ENCODE measurements at regions of chr12 and their contacts with region 1.

Region 1: DNA sequence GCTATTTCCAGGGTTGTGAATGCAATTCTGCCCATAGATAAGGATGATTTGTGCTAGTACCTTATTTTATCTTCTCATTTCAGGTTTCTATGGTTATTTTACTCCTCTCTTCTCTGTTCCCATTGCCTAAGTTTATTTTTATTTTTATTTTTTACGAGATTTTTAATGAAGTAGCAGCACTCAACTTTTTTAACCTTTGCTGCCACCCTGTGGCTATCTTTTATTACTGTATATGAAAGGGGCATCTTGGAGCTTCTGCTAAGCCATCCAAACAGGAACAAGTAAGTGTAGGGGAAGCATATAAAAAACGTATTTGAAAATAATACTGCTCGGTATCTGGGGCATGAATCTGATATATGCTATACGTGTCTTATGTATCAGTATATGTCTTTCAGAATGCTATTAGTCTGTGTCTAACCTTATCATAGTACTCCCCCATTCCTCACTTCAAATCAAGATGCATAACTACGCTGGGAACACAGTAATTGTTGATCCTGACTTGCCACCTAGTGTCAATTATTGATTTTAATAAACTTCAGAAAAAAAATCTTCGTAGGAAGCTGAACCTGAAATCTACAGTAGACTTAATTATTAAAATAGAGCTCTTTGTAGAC is 60.3 kb downstream of the KLRG1 start:
- DNase-seq: no peak
- ATAC-seq: peak; percentile 65; the same call in 1 of the 2 replicates
- H3K4me3 Mint-ChIP-seq: no peak overlapping the region
- H3K27ac Mint-ChIP-seq: no peak overlapping the region
- H3K4me1 Mint-ChIP-seq: peaks cover 7% of the 10 kb centered on the region; the same call in 1 of the 2 replicates
- H3K27me3 Mint-ChIP-seq: no peaks in the 10 kb centered on the region
- CTCF ChIP-seq: peak; percentile 24

Region 2: DNA sequence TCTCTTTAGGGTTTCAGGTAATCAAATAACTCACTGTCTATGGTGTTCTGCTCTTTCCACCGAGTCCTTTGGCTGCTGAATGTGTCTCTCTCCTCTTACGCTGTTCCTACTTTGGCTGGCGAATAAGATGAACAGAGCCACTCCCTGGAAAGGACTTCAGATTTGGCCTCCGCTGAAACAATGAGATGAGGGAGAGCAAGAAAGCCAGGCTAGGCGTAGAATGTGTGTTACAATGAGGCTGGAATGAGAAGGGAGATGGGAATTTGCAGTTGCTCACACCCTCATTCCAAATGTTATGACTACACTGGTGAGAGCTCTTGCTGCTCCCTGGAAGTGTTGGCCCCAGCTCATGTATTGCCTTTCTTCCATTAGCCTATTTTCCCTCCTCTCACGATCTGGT is 387.0 kb before region 1 on chr12 and contains the start of gene MFAP5:
- CTCF ChIA-PET with region 1: interaction called, 34 read pairs
- POLR2A ChIA-PET with region 1: no interaction called
- DNase-seq: no peak
- ATAC-seq: peak; percentile 29; the same call in 1 of the 2 replicates
- H3K4me3 Mint-ChIP-seq: no peak within 1 kb of the TSS
- H3K27ac Mint-ChIP-seq: no peak within 1 kb of the TSS
- H3K4me1 Mint-ChIP-seq: peaks cover 5% of the 10 kb centered on the region
- H3K27me3 Mint-ChIP-seq: no peaks in the 10 kb centered on the region
- CTCF ChIP-seq: no peak
- total RNA-seq, gene MFAP5: 0.69 to 0.96 TPM in 2 of 3 replicates, not detected in the other

Region 3: GRCh38 chr12:8681041-8681902 is 368.4 kb before region 1 on chr12:
- CTCF ChIA-PET with region 1: interaction called, 15 read pairs
- POLR2A ChIA-PET with region 1: no interaction called
- DNase-seq: no peak
- ATAC-seq: peak; percentile 55
- H3K4me3 Mint-ChIP-seq: peak overlapping the region; percentile 64
- H3K27ac Mint-ChIP-seq: peak overlapping the region; percentile 93
- H3K4me1 Mint-ChIP-seq: peaks cover 30% of the 10 kb centered on the region
- H3K27me3 Mint-ChIP-seq: no peaks in the 10 kb centered on the region
- CTCF ChIP-seq: no peak

Region 4: DNA sequence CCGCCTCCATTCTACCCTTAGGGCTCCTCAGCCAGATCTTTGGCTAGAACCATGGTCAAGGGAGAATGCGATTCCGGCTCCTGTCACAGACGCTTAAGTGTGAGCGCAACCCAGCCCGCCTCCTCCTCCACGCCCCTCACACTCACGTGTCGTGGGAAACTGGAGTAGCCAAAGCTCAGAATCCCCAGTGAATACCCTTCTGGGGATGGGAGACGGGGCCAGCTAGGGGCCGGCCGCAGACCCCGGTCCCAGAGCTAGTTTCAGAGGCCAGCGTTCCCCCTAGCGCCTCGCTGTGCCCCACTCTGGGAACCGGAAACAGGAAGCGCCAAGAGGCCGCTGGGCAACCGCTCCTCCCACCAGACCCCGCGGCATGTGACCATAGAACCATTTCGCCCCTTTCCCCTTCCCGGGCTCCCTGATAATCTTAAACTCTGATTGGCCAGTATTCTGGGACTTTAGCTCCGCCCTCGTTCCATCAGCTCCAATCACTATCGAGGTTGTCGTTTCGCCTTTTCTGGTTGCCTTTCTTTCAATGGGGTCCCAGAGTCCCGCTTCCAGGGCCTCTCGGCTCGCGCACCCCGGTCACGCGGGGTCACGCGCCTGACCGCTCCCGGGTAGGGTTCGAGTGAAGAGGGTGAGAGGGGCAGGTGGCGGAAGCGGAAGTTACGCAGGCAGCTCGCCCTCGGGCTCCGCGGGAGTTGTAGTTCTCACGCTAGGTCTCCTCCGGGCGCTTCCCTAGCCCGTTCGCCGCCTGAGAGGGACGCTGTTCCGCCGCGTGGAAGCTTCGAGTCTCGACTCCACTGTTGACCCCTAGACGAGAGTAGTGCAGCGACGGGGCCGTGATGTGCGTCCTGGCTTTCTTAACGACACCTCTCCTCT is 100.0 kb before region 1 on chr12 and contains the start of gene M6PR:
- CTCF ChIA-PET with region 1: interaction called, 38 read pairs
- POLR2A ChIA-PET with region 1: interaction called, 4 read pairs
- DNase-seq: peak; percentile 91
- ATAC-seq: peak; percentile 89
- H3K4me3 Mint-ChIP-seq: peak within 1 kb of the TSS; percentile 95
- H3K27ac Mint-ChIP-seq: peak within 1 kb of the TSS; percentile 93
- H3K4me1 Mint-ChIP-seq: peaks cover 20% of the 10 kb centered on the region
- H3K27me3 Mint-ChIP-seq: no peaks in the 10 kb centered on the region
- CTCF ChIP-seq: no peak
- total RNA-seq, gene M6PR: 106 to 139 TPM (median 112 TPM) in 3 replicates

Region 5: DNA sequence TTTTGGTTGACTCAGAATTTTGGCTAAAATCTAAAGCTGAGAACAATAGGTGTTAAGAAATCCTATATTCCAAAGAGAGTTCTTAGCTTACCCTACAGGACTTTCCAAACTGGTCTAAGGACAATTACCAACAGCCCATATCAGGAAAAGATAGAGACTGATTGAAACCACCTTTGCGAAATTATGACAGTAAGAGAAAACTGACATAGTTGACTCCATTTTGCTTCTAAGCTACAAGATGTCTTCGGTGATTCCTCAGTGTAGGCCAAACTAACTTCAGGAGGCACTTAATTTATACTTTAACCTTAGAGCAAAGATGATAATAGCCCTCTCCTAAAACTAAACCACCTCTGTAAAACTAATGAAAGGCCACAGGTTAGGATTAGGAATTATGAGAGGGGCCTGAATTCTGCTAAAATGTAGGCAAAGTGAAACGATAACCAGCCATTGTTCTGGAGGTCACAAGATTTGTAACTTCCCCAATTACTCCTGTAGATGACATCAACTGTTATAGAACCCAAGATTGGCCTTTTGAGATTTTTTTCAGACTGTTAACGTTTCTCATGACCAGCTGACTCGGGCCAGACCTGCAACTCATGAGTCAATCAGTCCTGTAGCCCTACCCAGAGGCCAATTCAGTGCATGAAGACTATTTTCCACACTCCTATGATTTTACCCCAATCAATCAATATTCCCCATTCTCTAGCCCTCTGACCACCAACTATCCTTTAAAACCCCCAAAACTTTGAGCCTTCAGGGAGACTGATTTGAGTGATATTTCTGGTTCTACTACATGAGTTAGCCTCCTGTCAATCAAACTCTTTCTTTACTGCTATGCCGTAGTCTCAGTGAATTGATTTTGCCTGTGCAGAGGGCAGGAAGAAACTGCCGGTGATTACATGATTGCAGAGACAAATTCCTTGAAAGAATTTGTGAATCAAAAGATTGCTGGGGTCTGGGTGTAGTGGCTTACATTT is 17.1 kb before region 1 on chr12:
- CTCF ChIA-PET with region 1: interaction called, 11 read pairs
- POLR2A ChIA-PET with region 1: no interaction called
- DNase-seq: no peak
- ATAC-seq: no peak
- H3K4me3 Mint-ChIP-seq: no peak overlapping the region
- H3K27ac Mint-ChIP-seq: no peak overlapping the region
- H3K4me1 Mint-ChIP-seq: peaks cover 7% of the 10 kb centered on the region
- H3K27me3 Mint-ChIP-seq: no peaks in the 10 kb centered on the region; the same call in 1 of the 2 replicates
- CTCF ChIP-seq: no peak

Region 6: GRCh38 chr12:9064201-9064814 is 14.7 kb after region 1 on chr12:
- CTCF ChIA-PET with region 1: interaction called, 31 read pairs
- POLR2A ChIA-PET with region 1: no interaction called
- DNase-seq: peak; percentile 70
- ATAC-seq: peak; percentile 57
- H3K4me3 Mint-ChIP-seq: peak overlapping the region; percentile 80
- H3K27ac Mint-ChIP-seq: peak overlapping the region; percentile 78; the same call in 1 of the 2 replicates
- H3K4me1 Mint-ChIP-seq: peaks cover 20% of the 10 kb centered on the region
- H3K27me3 Mint-ChIP-seq: peaks cover 3% of the 10 kb centered on the region
- CTCF ChIP-seq: no peak

Measured in WTC11 (cell line).